Naive thymus-derived CD4-positive, alpha-beta T cell (primary cell): ENCODE measurements at regions of chr19 and their contacts with region 1.

Region 1: DNA sequence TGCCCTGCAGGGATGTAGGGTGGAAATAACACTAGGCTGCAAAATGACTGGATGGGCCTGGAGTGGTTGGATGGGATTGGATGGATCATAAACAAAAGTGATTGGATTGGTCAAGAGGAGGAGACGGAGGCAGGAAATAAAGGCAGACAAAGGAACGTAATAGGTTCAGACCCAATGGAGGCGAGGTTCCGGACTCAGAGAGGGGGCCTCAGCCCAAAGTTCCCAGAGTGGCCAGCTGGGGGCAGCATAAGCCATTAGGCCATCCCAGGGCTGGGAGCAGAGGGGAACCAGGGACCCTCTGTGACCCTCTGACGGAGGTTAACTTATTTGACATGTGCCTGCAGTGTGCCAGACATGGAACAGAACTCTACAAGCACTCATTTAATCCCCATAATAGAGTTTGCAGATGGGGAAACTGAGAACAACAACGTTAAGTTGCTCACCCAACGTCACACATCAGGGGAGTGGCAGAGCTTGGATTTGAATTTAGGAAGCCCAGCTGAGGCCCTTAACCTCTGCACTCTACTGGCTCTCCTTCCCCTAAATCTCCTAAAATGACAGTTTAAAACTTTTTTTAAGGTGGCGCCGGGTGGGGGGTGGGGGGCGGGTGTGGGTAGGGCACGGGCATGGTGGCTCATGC is 15.3 kb upstream of the MAP1S start:
- DNase-seq: peak; percentile 51 to 77 (median 65)
- ATAC-seq: peak; percentile 97
- H3K4me3 ChIP-seq: no peak overlapping the region
- H3K4me3 Mint-ChIP-seq: no peak overlapping the region
- H3K27ac ChIP-seq: no peak overlapping the region
- H3K27ac Mint-ChIP-seq: peak overlapping the region in 1 of 9 donors; percentile 42
- H3K4me1 ChIP-seq: no peaks in the 10 kb centered on the region
- H3K4me1 Mint-ChIP-seq: peaks cover 0 to 5% (median 0%) of the 10 kb centered on the region in 7 donors
- H3K27me3 ChIP-seq: no peaks in the 10 kb centered on the region
- H3K27me3 Mint-ChIP-seq: peaks cover 0 to 10% (median 7%) of the 10 kb centered on the region in 5 donors

Region 2: DNA sequence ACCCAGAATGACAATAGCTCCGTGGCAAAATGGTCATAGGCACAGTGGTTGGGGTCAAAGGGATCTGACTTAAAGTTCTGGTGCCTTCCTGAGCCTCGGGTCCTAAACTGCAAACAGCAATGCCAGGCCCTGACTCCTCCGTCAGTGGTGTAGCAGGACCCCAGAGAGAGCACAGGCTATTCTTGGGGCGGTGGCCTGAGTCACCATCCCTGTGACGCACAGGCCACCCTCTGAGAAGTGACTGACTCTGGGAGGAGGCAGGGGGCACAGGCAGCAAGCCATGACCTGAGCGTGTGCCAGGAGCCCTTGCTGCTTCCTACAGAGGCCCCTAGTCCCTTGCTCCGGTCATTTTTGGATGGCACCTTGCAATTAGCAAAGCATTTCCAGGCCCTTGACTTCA is 345.5 kb before region 1 on chr19:
- CTCF ChIA-PET with region 1: no interaction called
- POLR2A ChIA-PET with region 1: no interaction called
- intact Hi-C with region 1: no loop called
- DNase-seq: no peak
- ATAC-seq: no peak
- H3K4me3 ChIP-seq: no peak overlapping the region
- H3K4me3 Mint-ChIP-seq: no peak overlapping the region
- H3K27ac ChIP-seq: no peak overlapping the region
- H3K27ac Mint-ChIP-seq: no peak overlapping the region
- H3K4me1 ChIP-seq: no peaks in the 10 kb centered on the region
- H3K4me1 Mint-ChIP-seq: peaks cover 0 to 2% (median 0%) of the 10 kb centered on the region in 7 donors
- H3K27me3 ChIP-seq: no peaks in the 10 kb centered on the region
- H3K27me3 Mint-ChIP-seq: peaks cover 0 to 8% (median 0%) of the 10 kb centered on the region in 5 donors

Region 3: DNA sequence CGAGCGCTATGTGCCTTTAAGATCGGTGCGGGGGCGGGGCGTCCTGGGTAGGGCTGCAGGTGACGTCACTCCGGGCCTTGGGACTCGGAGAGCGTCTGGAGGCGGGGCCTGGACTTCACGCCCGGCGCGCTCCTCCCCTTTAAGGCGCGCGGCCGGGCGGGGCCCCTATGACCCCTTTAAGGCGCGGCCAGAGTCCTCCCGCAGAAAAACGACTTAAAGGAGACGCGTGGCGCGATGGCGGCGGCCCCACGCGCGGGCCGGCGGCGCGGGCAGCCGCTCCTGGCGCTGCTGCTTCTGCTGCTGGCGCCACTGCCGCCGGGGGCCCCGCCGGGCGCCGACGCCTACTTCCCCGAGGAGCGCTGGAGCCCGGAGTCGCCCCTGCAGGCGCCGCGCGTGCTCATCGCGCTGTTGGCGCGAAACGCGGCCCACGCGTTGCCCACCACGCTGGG is 148.4 kb before region 1 on chr19 and contains the start of gene COLGALT1:
- CTCF ChIA-PET with region 1: no interaction called
- POLR2A ChIA-PET with region 1: no interaction called
- intact Hi-C with region 1: no loop called
- DNase-seq: peak; percentile 92 to 99 (median 96)
- ATAC-seq: peak; percentile 99
- H3K4me3 ChIP-seq: peak within 1 kb of the TSS; percentile 81
- H3K4me3 Mint-ChIP-seq: peak within 1 kb of the TSS; percentile 73 to 90 (median 84)
- H3K27ac ChIP-seq: peak within 1 kb of the TSS; percentile 76
- H3K27ac Mint-ChIP-seq: peak within 1 kb of the TSS in 6 of 9 donors; percentile 36 to 80 (median 66)
- H3K4me1 ChIP-seq: peaks cover 16% of the 10 kb centered on the region in 2 donors
- H3K4me1 Mint-ChIP-seq: peaks cover 8 to 29% (median 20%) of the 10 kb centered on the region in 7 donors
- H3K27me3 ChIP-seq: no peaks in the 10 kb centered on the region
- H3K27me3 Mint-ChIP-seq: no peaks in the 10 kb centered on the region
- total RNA-seq, gene COLGALT1: 50.1 to 70.6 (median 61.3) TPM

Region 4: GRCh38 chr19:17766543-17767131 is 62.7 kb after region 1 on chr19:
- CTCF ChIA-PET with region 1: interaction called, 4 read pairs
- POLR2A ChIA-PET with region 1: no interaction called
- intact Hi-C with region 1: loop called (anchors 1 to 2 kb)
- DNase-seq: peak in 4 of 9 donors; percentile 34 to 57 (median 45)
- ATAC-seq: peak; percentile 59
- H3K4me3 ChIP-seq: no peak overlapping the region
- H3K4me3 Mint-ChIP-seq: peak overlapping the region in 2 of 10 donors; percentile 12 to 47
- H3K27ac ChIP-seq: no peak overlapping the region
- H3K27ac Mint-ChIP-seq: peak overlapping the region in 2 of 9 donors; percentile 36 to 63
- H3K4me1 ChIP-seq: no peaks in the 10 kb centered on the region
- H3K4me1 Mint-ChIP-seq: peaks cover 0 to 10% (median 3%) of the 10 kb centered on the region in 7 donors
- H3K27me3 ChIP-seq: no peaks in the 10 kb centered on the region
- H3K27me3 Mint-ChIP-seq: no peaks in the 10 kb centered on the region

Region 5: GRCh38 chr19:17775245-17775916 is 71.4 kb after region 1 on chr19:
- CTCF ChIA-PET with region 1: interaction called, 6 read pairs
- POLR2A ChIA-PET with region 1: no interaction called
- intact Hi-C with region 1: loop called (anchors 2 to 5 kb)
- DNase-seq: peak in 2 of 9 donors; percentile 25 to 38
- ATAC-seq: peak; percentile 24
- H3K4me3 ChIP-seq: no peak overlapping the region
- H3K4me3 Mint-ChIP-seq: no peak overlapping the region
- H3K27ac ChIP-seq: no peak overlapping the region
- H3K27ac Mint-ChIP-seq: no peak overlapping the region
- H3K4me1 ChIP-seq: no peaks in the 10 kb centered on the region
- H3K4me1 Mint-ChIP-seq: peaks cover 0 to 18% (median 9%) of the 10 kb centered on the region in 7 donors
- H3K27me3 ChIP-seq: no peaks in the 10 kb centered on the region
- H3K27me3 Mint-ChIP-seq: no peaks in the 10 kb centered on the region